ENCODE measurements at regions of chr11 and their contacts with region 1.

Region 1: GRCh38 chr11:95764267-95764898 is 25.2 kb downstream of the FAM76B start:
- DNase-seq: peak in 1 of 2 experiments; percentile 56
- H3K4me3 ChIP-seq: no peak overlapping the region
- H3K4me3 Mint-ChIP-seq: no peak overlapping the region
- H3K27ac Mint-ChIP-seq: no peak overlapping the region
- H3K4me1 ChIP-seq: peaks cover 7% of the 10 kb centered on the region; the same call in 1 of the 2 replicates
- H3K4me1 Mint-ChIP-seq: peaks cover 6% of the 10 kb centered on the region
- H3K27me3 ChIP-seq: no peaks in the 10 kb centered on the region
- H3K27me3 Mint-ChIP-seq: peaks cover 8% of the 10 kb centered on the region
- CTCF ChIP-seq: peak; percentile 56 to 91

Region 2: DNA sequence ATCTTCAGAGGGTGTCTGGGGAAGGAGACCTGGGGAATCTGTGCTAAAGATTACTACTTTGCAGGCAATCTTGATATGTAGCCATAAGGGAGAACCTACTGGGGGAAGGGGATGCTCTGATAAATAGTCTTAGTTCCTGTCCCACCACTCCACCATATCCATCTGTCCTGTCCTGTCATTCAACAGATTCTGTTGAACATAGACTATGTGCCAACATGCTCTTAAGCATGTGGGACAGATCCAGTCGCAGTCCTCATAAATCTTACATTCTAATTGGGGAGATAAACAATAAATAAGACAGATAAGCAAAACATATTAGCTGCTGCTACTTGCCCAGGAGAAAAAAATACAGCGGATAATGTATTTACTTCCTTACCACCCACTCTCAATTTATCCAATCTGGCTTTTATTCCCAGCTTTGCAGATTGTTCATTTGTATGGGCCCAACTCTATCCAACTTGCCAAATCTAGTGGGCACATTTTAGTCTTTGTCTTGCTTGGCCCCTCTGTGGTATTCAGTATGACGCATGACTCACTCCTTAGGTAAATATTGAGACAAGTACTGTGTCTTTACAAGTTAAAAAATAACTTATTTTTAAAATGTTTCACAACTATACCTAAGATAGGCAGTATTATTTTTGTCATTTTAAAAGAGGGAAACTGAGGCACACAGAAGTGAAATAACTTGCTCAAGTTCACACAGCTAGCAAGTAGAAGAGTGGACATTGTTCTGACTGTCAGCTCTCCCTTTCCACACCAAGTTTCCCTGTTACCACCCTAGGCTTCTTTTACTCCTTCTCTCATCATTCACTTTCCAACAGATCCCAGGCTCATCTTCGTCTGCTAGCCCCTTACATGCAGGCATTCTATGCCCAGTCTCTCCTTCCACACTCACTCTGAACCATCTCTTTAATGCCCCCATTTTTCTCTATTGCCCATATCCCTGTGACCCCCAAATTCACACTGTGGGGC is 399.8 kb before region 1 on chr11:
- CTCF ChIA-PET with region 1: no interaction called
- POLR2A ChIA-PET with region 1: no interaction called
- intact Hi-C with region 1: loop called (anchors 1 kb)
- DNase-seq: peak in 1 of 2 experiments; percentile 61
- H3K4me3 ChIP-seq: no peak overlapping the region
- H3K4me3 Mint-ChIP-seq: peak overlapping the region; percentile 50
- H3K27ac Mint-ChIP-seq: peak overlapping the region; percentile 80
- H3K4me1 ChIP-seq: peaks cover 37% of the 10 kb centered on the region
- H3K4me1 Mint-ChIP-seq: peaks cover 38% of the 10 kb centered on the region
- H3K27me3 ChIP-seq: no peaks in the 10 kb centered on the region
- H3K27me3 Mint-ChIP-seq: no peaks in the 10 kb centered on the region
- CTCF ChIP-seq: no peak

Region 3: DNA sequence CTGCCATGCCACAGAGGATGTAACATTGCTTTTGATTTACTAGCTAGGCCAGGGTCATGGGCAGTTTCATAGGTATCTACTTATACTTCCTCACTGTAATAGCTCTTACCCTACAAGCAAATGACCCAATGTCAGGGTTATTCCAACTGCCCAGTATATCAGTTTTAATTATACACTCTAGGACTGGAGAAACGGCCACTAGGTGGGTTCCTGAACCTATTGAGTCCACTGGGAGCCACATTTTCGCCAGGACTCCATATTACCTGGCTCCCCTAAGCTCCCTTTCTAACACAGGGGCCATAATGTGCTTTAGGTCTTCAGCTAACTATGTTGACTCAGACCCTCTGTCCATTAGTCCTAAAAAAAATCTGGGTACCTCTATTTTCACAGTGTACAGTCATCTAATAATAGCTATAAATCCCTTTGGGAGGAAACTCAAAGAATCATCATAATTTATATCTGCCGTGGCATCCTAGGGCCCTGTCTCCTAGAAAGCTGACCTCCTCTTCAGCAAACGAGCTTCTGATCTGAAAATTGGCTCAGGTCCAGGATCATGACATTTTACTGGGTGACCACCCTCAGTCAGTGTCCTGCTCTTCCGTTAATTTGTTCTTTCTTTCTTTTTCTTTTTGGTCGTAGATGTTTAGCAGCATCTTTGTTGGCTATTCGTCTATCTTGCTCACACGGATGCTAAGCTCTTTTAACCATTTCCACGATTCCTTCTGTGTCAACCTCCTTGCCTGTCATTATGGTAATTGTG is 219.1 kb before region 1 on chr11:
- CTCF ChIA-PET with region 1: no interaction called
- POLR2A ChIA-PET with region 1: no interaction called
- intact Hi-C with region 1: loop called (anchors 2 kb)
- DNase-seq: peak in 1 of 2 experiments; percentile 26
- H3K4me3 ChIP-seq: no peak overlapping the region
- H3K4me3 Mint-ChIP-seq: no peak overlapping the region
- H3K27ac Mint-ChIP-seq: no peak overlapping the region
- H3K4me1 ChIP-seq: no peaks in the 10 kb centered on the region
- H3K4me1 Mint-ChIP-seq: peaks cover 6% of the 10 kb centered on the region
- H3K27me3 ChIP-seq: peaks cover 2% of the 10 kb centered on the region; the same call in 1 of the 2 replicates
- H3K27me3 Mint-ChIP-seq: peaks cover 6% of the 10 kb centered on the region
- CTCF ChIP-seq: peak in 1 of 2 experiments; percentile 39

Region 4: DNA sequence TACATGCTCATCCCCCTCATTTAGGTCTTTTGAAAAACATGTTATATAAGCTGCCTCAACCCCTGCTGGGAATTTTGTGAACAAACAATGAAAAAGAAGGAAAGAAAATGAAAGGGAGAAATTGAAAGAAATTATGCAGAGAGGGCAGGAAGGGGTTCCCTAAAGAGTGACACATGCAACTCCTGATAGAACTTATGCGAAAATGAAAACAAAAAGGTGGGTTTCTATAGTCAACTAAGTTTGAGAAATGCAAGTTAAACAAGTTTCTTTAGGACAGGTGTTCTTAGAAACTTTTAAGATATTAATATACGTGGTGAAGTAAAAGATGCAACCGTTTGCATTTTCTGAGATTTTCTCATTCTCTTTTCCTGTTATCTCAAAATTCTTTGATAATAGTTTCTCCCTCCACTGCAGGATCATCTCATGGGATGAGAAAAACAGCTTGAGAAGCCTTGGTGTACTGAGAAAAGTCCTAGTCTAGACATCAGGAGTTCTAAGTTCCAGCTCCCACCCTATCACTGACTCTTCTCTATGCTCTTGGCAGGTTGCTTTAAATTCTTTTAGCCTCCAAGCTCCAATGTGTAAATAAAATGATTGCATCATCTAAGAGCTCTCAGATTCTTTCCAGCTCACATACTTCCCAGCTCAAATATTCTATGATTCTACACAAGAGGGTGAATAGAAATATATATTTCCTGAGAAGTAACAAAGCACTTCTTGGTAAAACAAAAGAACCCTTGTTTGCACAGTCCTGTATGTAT is 84.0 kb before region 1 on chr11:
- CTCF ChIA-PET with region 1: no interaction called
- POLR2A ChIA-PET with region 1: no interaction called
- intact Hi-C with region 1: no loop called
- DNase-seq: peak in 1 of 2 experiments; percentile 25
- H3K4me3 ChIP-seq: no peak overlapping the region
- H3K4me3 Mint-ChIP-seq: no peak overlapping the region
- H3K27ac Mint-ChIP-seq: peak overlapping the region; percentile 3
- H3K4me1 ChIP-seq: peaks cover 11% of the 10 kb centered on the region
- H3K4me1 Mint-ChIP-seq: peaks cover 15% of the 10 kb centered on the region
- H3K27me3 ChIP-seq: no peaks in the 10 kb centered on the region; the same call in 1 of the 2 replicates
- H3K27me3 Mint-ChIP-seq: peaks cover 4% of the 10 kb centered on the region
- CTCF ChIP-seq: no peak

Region 5: GRCh38 chr11:95705485-95706124 is 58.8 kb before region 1 on chr11:
- CTCF ChIA-PET with region 1: no interaction called
- POLR2A ChIA-PET with region 1: no interaction called
- intact Hi-C with region 1: loop called (anchors 1 kb)
- DNase-seq: peak; percentile 85 to 89
- H3K4me3 ChIP-seq: no peak overlapping the region
- H3K4me3 Mint-ChIP-seq: no peak overlapping the region
- H3K27ac Mint-ChIP-seq: no peak overlapping the region
- H3K4me1 ChIP-seq: peaks cover 38% of the 10 kb centered on the region
- H3K4me1 Mint-ChIP-seq: peaks cover 24% of the 10 kb centered on the region
- H3K27me3 ChIP-seq: no peaks in the 10 kb centered on the region
- H3K27me3 Mint-ChIP-seq: no peaks in the 10 kb centered on the region
- CTCF ChIP-seq: peak; percentile 93 to 94

Region 6: GRCh38 chr11:95821640-95822039 is 57.3 kb after region 1 on chr11:
- CTCF ChIA-PET with region 1: no interaction called
- POLR2A ChIA-PET with region 1: no interaction called
- intact Hi-C with region 1: no loop called
- DNase-seq: no peak
- H3K4me3 ChIP-seq: no peak overlapping the region
- H3K4me3 Mint-ChIP-seq: no peak overlapping the region
- H3K27ac Mint-ChIP-seq: no peak overlapping the region
- H3K4me1 ChIP-seq: no peaks in the 10 kb centered on the region
- H3K4me1 Mint-ChIP-seq: peaks cover 7% of the 10 kb centered on the region
- H3K27me3 ChIP-seq: no peaks in the 10 kb centered on the region
- H3K27me3 Mint-ChIP-seq: no peaks in the 10 kb centered on the region
- CTCF ChIP-seq: no peak

Region 7: GRCh38 chr11:95877291-95877690 is 112.9 kb after region 1 on chr11:
- CTCF ChIA-PET with region 1: no interaction called
- POLR2A ChIA-PET with region 1: no interaction called
- intact Hi-C with region 1: no loop called
- DNase-seq: no peak
- H3K4me3 ChIP-seq: no peak overlapping the region
- H3K4me3 Mint-ChIP-seq: no peak overlapping the region
- H3K27ac Mint-ChIP-seq: no peak overlapping the region
- H3K4me1 ChIP-seq: no peaks in the 10 kb centered on the region
- H3K4me1 Mint-ChIP-seq: no peaks in the 10 kb centered on the region
- H3K27me3 ChIP-seq: no peaks in the 10 kb centered on the region
- H3K27me3 Mint-ChIP-seq: no peaks in the 10 kb centered on the region
- CTCF ChIP-seq: no peak

Region 8: DNA sequence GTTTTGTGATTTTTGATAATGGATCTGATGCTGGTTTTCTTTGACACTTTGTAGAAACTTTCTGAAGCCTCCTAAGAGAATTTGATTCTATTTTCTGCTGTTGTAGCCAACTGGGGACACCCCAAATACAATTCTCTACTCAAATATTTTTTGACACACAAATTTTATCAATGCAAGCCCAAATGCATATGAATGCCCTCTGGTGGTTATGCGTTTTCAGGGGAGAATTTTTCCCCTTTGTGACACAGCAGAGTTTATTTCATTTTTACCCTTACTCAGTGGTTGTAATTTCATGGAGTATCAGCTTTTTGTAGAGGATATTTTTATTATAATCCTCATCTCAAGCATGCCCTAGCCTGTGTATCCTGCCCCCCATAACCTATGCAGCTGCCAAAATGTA is 204.2 kb after region 1 on chr11:
- CTCF ChIA-PET with region 1: no interaction called
- POLR2A ChIA-PET with region 1: no interaction called
- intact Hi-C with region 1: no loop called
- DNase-seq: peak in 1 of 2 experiments; percentile 30
- H3K4me3 ChIP-seq: no peak overlapping the region
- H3K4me3 Mint-ChIP-seq: no peak overlapping the region
- H3K27ac Mint-ChIP-seq: no peak overlapping the region
- H3K4me1 ChIP-seq: no peaks in the 10 kb centered on the region
- H3K4me1 Mint-ChIP-seq: no peaks in the 10 kb centered on the region
- H3K27me3 ChIP-seq: no peaks in the 10 kb centered on the region
- H3K27me3 Mint-ChIP-seq: no peaks in the 10 kb centered on the region
- CTCF ChIP-seq: peak; percentile 58 to 62

Measured in Caco-2 (cell line).